Endothelial cell of umbilical vein (primary cell): ENCODE measurements at regions of chr9 and their contacts with region 1.

Region 1: GRCh38 chr9:127838375-127839078 is 15.9 kb downstream of the ENG start:
- DNase-seq: peak; percentile 97
- H3K4me3 ChIP-seq: no peak overlapping the region
- H3K27ac ChIP-seq: peak overlapping the region; percentile 99
- H3K4me1 ChIP-seq: peaks cover 74% of the 10 kb centered on the region
- H3K27me3 ChIP-seq: no peaks in the 10 kb centered on the region
- CTCF ChIP-seq: no peak
- POLR2A ChIP-seq: peak; percentile 76

Region 2: GRCh38 chr9:127770905-127771569 is 67.5 kb before region 1 on chr9:
- CTCF ChIA-PET with region 1: no interaction called
- POLR2A ChIA-PET with region 1: interaction called, 3 read pairs
- dilution Hi-C with region 1: no loop called
- intact Hi-C with region 1: loop called (anchors 2 kb)
- DNase-seq: peak; percentile 99
- H3K4me3 ChIP-seq: peak overlapping the region; percentile 35 to 79 (median 75)
- H3K27ac ChIP-seq: peak overlapping the region; percentile 96
- H3K4me1 ChIP-seq: peaks cover 39% of the 10 kb centered on the region
- H3K27me3 ChIP-seq: no peaks in the 10 kb centered on the region
- CTCF ChIP-seq: no peak
- POLR2A ChIP-seq: peak; percentile 93

Region 3: DNA sequence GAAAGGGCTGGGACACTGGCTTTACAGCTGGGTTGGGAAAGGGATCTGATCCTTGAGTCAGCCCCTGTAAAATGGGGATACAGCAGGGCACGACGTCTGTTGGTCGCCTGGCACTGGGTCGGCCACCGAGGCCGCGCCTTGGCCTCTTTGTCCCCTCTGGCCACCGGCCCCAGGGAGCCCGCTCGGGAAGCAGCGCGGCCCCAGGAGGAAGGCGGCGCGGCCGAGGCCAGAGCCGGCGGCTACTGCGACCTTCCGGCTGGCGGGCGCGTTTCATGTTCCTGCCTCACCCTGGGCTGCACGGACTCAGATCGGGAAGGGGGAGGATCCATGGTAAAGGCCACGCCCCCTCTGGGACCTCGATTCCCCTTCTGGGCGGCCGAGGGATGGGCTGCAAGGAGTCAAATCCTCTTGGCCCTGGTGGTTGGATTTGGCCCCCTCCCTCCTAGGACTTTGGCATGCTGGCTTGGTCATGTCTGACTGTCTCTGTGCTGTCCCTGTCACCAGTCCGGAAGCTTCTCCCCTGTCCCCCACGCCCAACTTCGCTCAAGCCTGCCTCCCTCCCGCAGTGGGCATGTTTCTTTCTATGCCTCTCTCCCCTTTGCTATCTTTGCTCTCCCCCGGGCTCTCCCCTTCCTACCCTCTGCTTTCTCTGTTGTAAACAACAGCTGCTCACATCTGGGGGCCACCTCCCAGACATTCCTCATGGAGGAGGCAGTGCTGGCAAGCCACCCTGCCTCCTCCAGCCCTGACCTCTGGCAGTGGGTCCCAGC is 10.1 kb before region 1 on chr9:
- CTCF ChIA-PET with region 1: interaction called, 11 read pairs
- POLR2A ChIA-PET with region 1: interaction called, 3 read pairs
- dilution Hi-C with region 1: no loop called
- intact Hi-C with region 1: loop called (anchors 1 kb)
- DNase-seq: peak; percentile 79
- H3K4me3 ChIP-seq: no peak overlapping the region
- H3K27ac ChIP-seq: peak overlapping the region; percentile 81
- H3K4me1 ChIP-seq: peaks cover 44% of the 10 kb centered on the region
- H3K27me3 ChIP-seq: no peaks in the 10 kb centered on the region
- CTCF ChIP-seq: no peak
- POLR2A ChIP-seq: peak; percentile 64

Region 4: DNA sequence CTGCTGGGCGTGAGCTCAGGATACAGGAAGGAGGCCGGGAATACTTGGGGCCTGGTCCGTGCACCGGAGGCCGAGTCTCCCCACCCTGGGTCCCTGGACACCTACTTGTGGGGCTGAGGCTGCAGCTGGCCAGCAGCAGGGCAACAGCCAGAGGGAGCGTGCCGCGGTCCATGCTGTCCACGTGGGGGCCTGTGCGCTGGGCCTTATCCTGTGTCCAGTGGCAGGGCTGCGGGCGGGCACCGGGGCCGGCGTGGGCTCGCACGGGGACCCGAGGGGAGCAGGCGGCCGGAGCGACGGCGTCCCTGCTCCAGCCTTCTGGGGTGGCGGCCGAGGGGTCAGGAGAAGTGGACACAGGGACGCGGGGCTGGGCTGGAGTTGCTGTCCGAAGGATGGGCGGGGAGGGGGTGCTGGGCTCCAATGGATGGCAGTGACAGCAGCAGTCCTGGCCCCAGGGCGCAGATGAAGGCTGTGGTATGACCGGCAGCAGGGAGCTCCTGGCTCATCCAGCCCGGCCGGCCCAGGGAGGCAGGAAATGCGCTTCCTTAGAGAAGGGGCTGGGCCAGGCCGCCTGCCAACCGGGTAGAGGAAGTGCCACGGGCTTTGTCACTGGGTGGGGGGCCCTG is 15.8 kb after region 1 on chr9 and contains the start of gene ENG:
- CTCF ChIA-PET with region 1: interaction called, 42 read pairs
- POLR2A ChIA-PET with region 1: interaction called, 14 read pairs
- dilution Hi-C with region 1: no loop called
- intact Hi-C with region 1: loop called (anchors 1 kb)
- DNase-seq: peak; percentile 63
- H3K4me3 ChIP-seq: peak within 1 kb of the TSS; percentile 81 to 99 (median 97)
- H3K27ac ChIP-seq: peak within 1 kb of the TSS; percentile 82
- H3K4me1 ChIP-seq: peaks cover 38% of the 10 kb centered on the region
- H3K27me3 ChIP-seq: no peaks in the 10 kb centered on the region
- CTCF ChIP-seq: peak in 1 of 2 donors; percentile 26
- POLR2A ChIP-seq: peak; percentile 98
- total RNA-seq, gene ENG: 688 and 728 TPM in 2 replicates